ENCODE measurements at regions of chr11 and their contacts with region 1.

Region 1: GRCh38 chr11:117748771-117749540 is 48.1 kb downstream of the DSCAML1 start:
- DNase-seq: peak; percentile 89
- ATAC-seq: peak; percentile 94
- H3K4me3 ChIP-seq: peak overlapping the region in 1 of 3 experiments; percentile 38; a peak in 2 of 6 replicates
- H3K27ac ChIP-seq: peak overlapping the region; percentile 23
- H3K4me1 ChIP-seq: peaks cover 50% of the 10 kb centered on the region
- H3K27me3 ChIP-seq: peaks cover 0 to 16% of the 10 kb centered on the region in 2 experiments; a peak in 1 of 5 replicates
- CTCF ChIP-seq: peak; percentile 34; the same call in 1 of the 2 replicates
- EP300 ChIP-seq: peak; percentile 76 to 93
- POLR2A ChIP-seq: no peak
- RAD21 ChIP-seq: no peak

Region 2: DNA sequence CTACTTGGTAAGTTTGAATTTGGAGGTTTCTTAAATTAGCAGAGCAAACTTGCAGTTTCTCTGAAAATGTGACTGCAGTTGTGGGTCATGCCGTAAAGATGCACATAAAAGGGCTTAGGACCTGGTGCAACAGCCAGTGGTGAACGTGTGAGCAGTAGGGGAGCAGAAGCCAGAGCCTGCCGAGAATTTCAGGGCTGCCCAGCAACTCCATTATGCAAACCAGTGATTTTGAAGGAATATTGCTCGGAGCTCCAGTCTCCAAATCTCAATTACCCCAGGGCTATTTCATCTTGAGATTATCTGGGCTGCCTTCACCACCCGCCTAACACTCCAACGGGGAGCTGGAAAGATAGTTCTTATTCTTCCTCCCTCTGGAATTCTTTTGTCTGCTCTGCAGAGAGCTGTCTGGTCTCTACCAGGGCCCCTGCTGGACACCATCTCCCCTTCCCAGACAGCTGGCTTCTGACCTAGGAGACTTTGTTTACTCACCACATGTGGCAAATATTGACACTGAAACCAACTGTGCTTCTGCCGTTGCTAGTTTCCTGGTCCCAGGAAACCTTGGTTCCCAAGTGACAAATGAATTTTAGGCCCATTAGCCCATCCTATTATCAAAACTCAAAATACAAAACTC is 45.9 kb before region 1 on chr11:
- CTCF ChIA-PET with region 1: no interaction called
- POLR2A ChIA-PET with region 1: no interaction called
- in situ Hi-C with region 1: no loop called
- intact Hi-C with region 1: loop called (anchors 1 kb)
- DNase-seq: peak; percentile 67
- ATAC-seq: peak; percentile 97
- H3K4me3 ChIP-seq: no peak overlapping the region
- H3K27ac ChIP-seq: no peak overlapping the region
- H3K4me1 ChIP-seq: peaks cover 17% of the 10 kb centered on the region
- H3K27me3 ChIP-seq: peaks cover 2 to 10% of the 10 kb centered on the region in 2 experiments; a peak in 2 of 5 replicates
- CTCF ChIP-seq: peak; percentile 33; the same call in 1 of the 2 replicates
- EP300 ChIP-seq: 0 out of 4 replicates have a peak, but pooled peaks of 1 of the 2 experiments have one; percentile 23
- POLR2A ChIP-seq: no peak
- RAD21 ChIP-seq: no peak

Region 3: GRCh38 chr11:118791111-118791965 is 1042.4 kb after region 1 on chr11 and contains the start of gene DDX6:
- CTCF ChIA-PET with region 1: no interaction called
- POLR2A ChIA-PET with region 1: no interaction called
- in situ Hi-C with region 1: no loop called
- intact Hi-C with region 1: no loop called
- DNase-seq: peak; percentile 67
- ATAC-seq: peak; percentile 80
- H3K4me3 ChIP-seq: peak within 1 kb of the TSS; percentile 91 to 98 (median 97)
- H3K27ac ChIP-seq: peak within 1 kb of the TSS; percentile 99
- H3K4me1 ChIP-seq: peaks cover 34% of the 10 kb centered on the region
- H3K27me3 ChIP-seq: peaks cover 0 to 2% of the 10 kb centered on the region in 2 experiments; a peak in 2 of 5 replicates
- CTCF ChIP-seq: peak; percentile 64
- EP300 ChIP-seq: no peak
- POLR2A ChIP-seq: peak; percentile 58 to 83
- RAD21 ChIP-seq: no peak
- total RNA-seq, gene DDX6: 59.2 and 163 TPM in 2 replicates

Measured in HepG2 (cell line).